Psoas muscle (tissue), 8 donors: ENCODE measurements at regions of chr12 and their contacts with region 1.

Region 1: GRCh38 chr12:46661110-46661845 is 164.5 kb downstream of the SLC38A4 start:
- DNase-seq: no peak
- ATAC-seq: peak; percentile 66 to 78 (median 76)
- H3K4me3 ChIP-seq: peak overlapping the region; percentile 9
- H3K27ac ChIP-seq: peak overlapping the region; percentile 80
- H3K4me1 ChIP-seq: peaks cover 71% of the 10 kb centered on the region
- H3K27me3 ChIP-seq: no peaks in the 10 kb centered on the region
- CTCF ChIP-seq: peak; percentile 77

Region 2: DNA sequence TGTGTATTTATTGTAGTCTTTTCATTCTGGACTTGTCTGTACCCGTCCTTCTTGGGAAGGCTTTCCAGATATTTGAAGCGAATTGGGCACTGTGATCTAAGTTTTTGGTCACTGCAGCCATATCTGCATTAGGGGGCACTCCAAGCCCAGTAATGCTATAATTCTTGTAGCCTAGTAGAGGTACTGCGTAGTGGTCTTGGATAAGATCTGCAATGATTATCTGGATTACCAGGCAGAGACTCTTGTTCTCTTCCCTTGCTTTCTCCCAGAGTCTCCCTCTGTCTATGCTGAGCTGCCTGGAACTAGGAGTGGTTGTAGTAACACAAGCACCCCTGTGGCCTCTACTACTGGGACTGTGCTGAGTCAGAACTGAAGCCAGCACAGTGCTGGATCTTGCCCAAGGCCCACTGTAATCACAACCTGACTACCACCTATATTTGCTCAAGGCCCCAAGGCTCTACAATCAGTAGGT is 318.7 kb before region 1 on chr12:
- intact Hi-C with region 1: loop called in 1 of 2 experiments (anchors 5 kb)
- DNase-seq: no peak
- ATAC-seq: peak; percentile 79 to 95 (median 86)
- H3K4me3 ChIP-seq: no peak overlapping the region
- H3K27ac ChIP-seq: no peak overlapping the region
- H3K4me1 ChIP-seq: peaks cover 9% of the 10 kb centered on the region
- H3K27me3 ChIP-seq: no peaks in the 10 kb centered on the region
- CTCF ChIP-seq: peak; percentile 69

Region 3: GRCh38 chr12:46382964-46383653 is 278.2 kb before region 1 on chr12:
- intact Hi-C with region 1: loop called (anchors 5 to 10 kb)
- DNase-seq: peak; percentile 97 to 99
- ATAC-seq: peak; percentile 86 to 92 (median 89)
- H3K4me3 ChIP-seq: peak overlapping the region; percentile 86
- H3K27ac ChIP-seq: peak overlapping the region; percentile 98
- H3K4me1 ChIP-seq: peaks cover 41% of the 10 kb centered on the region
- H3K27me3 ChIP-seq: no peaks in the 10 kb centered on the region
- CTCF ChIP-seq: no peak

Region 4: DNA sequence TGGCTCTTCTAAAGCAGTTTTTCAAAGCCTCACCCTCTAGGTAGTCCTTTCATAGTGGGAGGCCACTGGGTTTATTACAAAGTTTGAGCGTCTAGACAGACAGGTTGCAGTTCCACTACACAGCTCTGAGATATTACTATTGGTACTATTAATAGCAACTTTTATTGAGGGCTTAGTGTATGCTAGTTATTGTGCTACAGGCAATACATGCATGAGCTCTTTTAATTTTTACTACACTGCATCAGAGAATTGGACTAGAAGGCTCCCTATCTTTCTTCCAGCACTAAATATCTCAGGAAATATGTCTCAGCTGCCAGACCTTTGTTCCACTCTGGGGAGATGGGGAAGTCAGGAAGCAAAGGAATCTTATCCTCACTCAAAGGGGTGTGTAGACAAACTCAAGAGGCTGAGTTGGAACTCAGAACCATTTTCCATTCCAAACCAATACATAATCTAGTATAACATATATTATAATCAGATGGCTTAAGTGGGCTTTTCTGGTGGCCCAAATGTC is 126.9 kb before region 1 on chr12:
- intact Hi-C with region 1: loop called in 1 of 2 experiments (anchors 5 kb)
- DNase-seq: no peak
- ATAC-seq: peak in 1 of 4 donors; percentile 50
- H3K4me3 ChIP-seq: no peak overlapping the region
- H3K27ac ChIP-seq: no peak overlapping the region
- H3K4me1 ChIP-seq: peaks cover 35% of the 10 kb centered on the region
- H3K27me3 ChIP-seq: no peaks in the 10 kb centered on the region
- CTCF ChIP-seq: no peak